Colonic mucosa (tissue), 4 donors: ENCODE measurements at regions of chr1 and their contacts with region 1.

Region 1: GRCh38 chr1:244835276-244836134 is at the start of gene COX20:
- DNase-seq: peak; percentile 92
- H3K4me3 ChIP-seq: peak within 1 kb of the TSS; percentile 46
- H3K27ac ChIP-seq: peak within 1 kb of the TSS; percentile 99
- H3K4me1 ChIP-seq: no peaks in the 10 kb centered on the region
- H3K27me3 ChIP-seq: no peaks in the 10 kb centered on the region
- CTCF ChIP-seq: no peak
- total RNA-seq, gene COX20: 26.1 to 31.5 TPM

Region 2: DNA sequence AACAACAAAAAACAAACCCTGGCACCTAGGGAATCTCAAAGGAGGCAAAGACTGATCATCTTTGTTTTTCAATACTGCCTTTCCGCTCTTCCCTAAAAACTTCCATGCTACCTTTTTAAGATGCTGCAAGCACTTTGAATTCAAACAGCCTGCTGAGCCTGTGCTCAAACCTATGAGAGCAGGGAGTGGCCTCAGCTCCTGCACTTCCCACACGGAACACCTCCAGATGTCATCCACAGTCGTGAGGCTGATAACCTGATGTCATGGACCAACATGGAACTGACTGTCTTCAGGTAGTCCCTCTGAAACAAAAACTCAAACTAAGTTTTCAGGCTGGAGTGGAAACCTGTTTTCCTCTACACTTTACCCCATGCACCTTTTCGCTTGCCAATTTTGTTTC is 135.8 kb before region 1 on chr1:
- intact Hi-C with region 1: no loop called
- DNase-seq: no peak
- H3K4me3 ChIP-seq: no peak overlapping the region
- H3K27ac ChIP-seq: no peak overlapping the region
- H3K4me1 ChIP-seq: no peaks in the 10 kb centered on the region
- H3K27me3 ChIP-seq: no peaks in the 10 kb centered on the region
- CTCF ChIP-seq: no peak

Region 3: DNA sequence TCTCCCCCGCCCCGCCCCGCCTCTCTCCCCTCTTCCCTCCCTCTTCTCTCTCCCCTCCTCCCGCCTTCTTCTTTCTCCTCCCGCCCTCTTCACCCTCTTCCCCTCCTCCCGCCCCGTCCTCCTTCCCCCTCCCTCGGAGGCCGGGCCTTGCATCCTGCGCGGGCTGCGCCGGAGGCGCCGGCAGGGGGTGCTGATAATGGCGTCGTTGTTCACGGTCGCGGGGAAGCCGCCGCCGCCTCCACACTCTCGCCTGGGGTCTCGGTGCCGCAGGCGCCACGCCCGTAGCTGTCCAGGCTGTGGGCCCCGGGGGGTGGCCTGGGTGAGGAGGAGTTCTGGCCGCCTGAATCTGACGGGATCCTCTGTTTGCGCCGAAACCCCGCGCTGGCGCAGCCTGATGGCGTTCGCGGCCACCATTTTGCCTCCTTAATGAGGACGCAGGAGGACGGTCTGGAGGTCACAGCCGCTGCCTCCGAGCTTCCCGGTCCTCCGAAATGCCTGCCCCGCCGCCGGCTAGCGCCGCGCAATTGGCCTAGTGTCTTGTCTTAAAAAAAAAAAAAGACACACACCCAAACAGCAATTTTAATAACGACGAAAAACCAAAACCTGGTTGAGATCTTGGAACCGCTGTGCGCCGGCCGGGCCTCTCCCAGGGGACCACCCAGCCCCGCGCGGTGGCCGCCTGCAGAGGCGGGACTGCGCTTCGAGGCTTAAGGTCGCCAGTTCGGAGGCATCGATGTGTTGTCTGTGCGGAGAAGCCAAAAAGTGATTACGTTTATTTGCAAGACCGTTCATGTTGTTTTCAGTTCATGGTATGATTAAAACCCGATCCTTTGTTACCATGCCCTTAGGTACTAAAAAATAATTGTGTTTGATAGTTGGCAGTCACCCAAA is 135.4 kb after region 1 on chr1:
- intact Hi-C with region 1: loop called (anchors 10 kb)
- DNase-seq: peak; percentile 94
- H3K4me3 ChIP-seq: peak overlapping the region; percentile 42
- H3K27ac ChIP-seq: peak overlapping the region; percentile 95
- H3K4me1 ChIP-seq: no peaks in the 10 kb centered on the region
- H3K27me3 ChIP-seq: no peaks in the 10 kb centered on the region
- CTCF ChIP-seq: peak; percentile 50

Region 4: GRCh38 chr1:245060684-245061374 is 225.3 kb after region 1 on chr1:
- intact Hi-C with region 1: no loop called
- DNase-seq: peak; percentile 78
- H3K4me3 ChIP-seq: no peak overlapping the region
- H3K27ac ChIP-seq: no peak overlapping the region
- H3K4me1 ChIP-seq: no peaks in the 10 kb centered on the region
- H3K27me3 ChIP-seq: no peaks in the 10 kb centered on the region
- CTCF ChIP-seq: no peak